ENCODE measurements at regions of chr10 and their contacts with region 1.

Region 1: GRCh38 chr10:124719213-124719851 is 24.8 kb downstream of the FAM53B start:
- DNase-seq: peak; percentile 83
- ATAC-seq: peak; percentile 44
- H3K4me3 Mint-ChIP-seq: peak overlapping the region; percentile 68
- H3K27ac Mint-ChIP-seq: peak overlapping the region; percentile 95
- H3K4me1 Mint-ChIP-seq: peaks cover 95% of the 10 kb centered on the region
- H3K27me3 Mint-ChIP-seq: no peaks in the 10 kb centered on the region

Region 2: GRCh38 chr10:124588736-124589490 is 130.4 kb before region 1 on chr10:
- CTCF ChIA-PET with region 1: no interaction called
- POLR2A ChIA-PET with region 1: no interaction called
- intact Hi-C with region 1: no loop called
- DNase-seq: no peak
- ATAC-seq: no peak
- H3K4me3 Mint-ChIP-seq: no peak overlapping the region
- H3K27ac Mint-ChIP-seq: no peak overlapping the region
- H3K4me1 Mint-ChIP-seq: no peaks in the 10 kb centered on the region
- H3K27me3 Mint-ChIP-seq: no peaks in the 10 kb centered on the region

Region 3: GRCh38 chr10:124626759-124627380 is 92.5 kb before region 1 on chr10:
- CTCF ChIA-PET with region 1: interaction called, 5 read pairs
- POLR2A ChIA-PET with region 1: interaction called, 4 read pairs
- intact Hi-C with region 1: loop called in 1 of 2 experiments (anchors 1 kb)
- DNase-seq: peak; percentile 70
- ATAC-seq: peak; percentile 75
- H3K4me3 Mint-ChIP-seq: no peak overlapping the region
- H3K27ac Mint-ChIP-seq: peak overlapping the region; percentile 6
- H3K4me1 Mint-ChIP-seq: peaks cover 38% of the 10 kb centered on the region
- H3K27me3 Mint-ChIP-seq: peaks cover 2% of the 10 kb centered on the region

Region 4: DNA sequence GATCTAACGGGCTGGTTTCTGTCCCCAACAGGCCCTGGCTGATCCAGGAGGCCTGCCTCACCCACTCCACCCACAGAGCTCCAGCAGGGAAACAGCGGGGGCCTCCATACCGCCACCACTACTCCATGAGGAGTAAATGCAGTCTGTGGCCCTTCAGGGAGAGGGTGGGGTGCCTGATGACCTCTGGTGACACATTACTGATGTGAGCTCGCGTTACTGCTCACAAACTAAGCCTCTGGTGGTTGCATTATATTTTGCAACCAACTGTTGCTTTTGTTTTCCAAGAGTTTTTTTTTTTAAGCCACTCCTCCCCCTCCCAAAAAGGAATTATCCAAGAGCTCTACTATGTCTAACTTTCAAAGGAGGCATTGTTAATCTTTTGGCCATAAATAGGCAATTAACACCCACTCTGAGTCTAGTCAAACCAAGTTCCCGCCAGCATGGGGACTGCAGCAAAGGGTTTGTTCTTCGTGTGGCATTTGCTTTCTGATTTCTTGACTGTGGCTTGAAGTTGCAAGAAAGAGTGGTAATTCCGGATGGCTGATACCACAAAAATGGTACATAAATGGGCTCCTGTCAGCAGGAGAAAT is 47.8 kb before region 1 on chr10:
- CTCF ChIA-PET with region 1: interaction called, 4 read pairs
- POLR2A ChIA-PET with region 1: interaction called, 11 read pairs
- intact Hi-C with region 1: no loop called
- DNase-seq: peak; percentile 50
- ATAC-seq: peak; percentile 71
- H3K4me3 Mint-ChIP-seq: no peak overlapping the region
- H3K27ac Mint-ChIP-seq: peak overlapping the region; percentile 55
- H3K4me1 Mint-ChIP-seq: peaks cover 66% of the 10 kb centered on the region
- H3K27me3 Mint-ChIP-seq: no peaks in the 10 kb centered on the region

Region 5: DNA sequence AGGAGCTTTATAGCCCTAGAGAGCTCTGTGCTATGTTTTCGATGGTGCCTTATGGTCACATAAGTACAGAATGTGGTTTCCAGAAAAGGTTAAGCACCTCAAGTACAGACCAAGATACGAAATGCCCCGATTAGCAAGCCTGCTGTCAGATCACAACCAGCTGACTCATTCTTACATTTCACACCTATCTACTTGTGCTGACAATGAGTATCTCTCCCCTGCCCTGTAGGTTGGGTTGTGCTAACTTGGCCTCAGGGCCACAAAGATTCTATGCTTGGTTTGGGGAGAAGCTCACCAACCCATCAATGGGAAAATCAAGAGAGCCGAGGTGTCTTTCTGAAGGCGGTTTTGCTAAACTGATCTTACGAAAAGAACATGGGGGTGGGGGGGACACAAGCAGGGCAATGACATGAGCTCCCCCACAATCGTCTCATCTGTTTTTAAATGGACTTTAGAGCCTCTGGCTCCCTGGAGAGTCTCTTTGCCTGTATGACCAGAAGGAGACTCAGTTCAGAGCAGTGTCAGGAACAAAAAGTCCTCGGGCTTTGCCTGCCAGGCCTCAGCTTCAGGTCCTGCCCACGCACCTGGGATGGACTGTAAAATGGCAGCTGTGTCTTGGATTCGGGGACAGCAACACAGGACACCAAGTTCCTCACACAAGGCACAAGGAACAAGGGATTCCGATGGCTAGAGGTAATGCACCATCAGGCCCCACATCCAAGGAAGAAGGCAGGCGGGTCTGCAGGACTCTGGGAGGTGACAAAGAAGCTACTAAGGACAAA is 30.3 kb before region 1 on chr10:
- CTCF ChIA-PET with region 1: interaction called, 125 read pairs
- POLR2A ChIA-PET with region 1: interaction called, 63 read pairs
- intact Hi-C with region 1: loop called (anchors 1 kb)
- DNase-seq: peak; percentile 81
- ATAC-seq: peak; percentile 89
- H3K4me3 Mint-ChIP-seq: peak overlapping the region; percentile 8
- H3K27ac Mint-ChIP-seq: peak overlapping the region; percentile 84
- H3K4me1 Mint-ChIP-seq: peaks cover 81% of the 10 kb centered on the region
- H3K27me3 Mint-ChIP-seq: peaks cover 2% of the 10 kb centered on the region

Region 6: DNA sequence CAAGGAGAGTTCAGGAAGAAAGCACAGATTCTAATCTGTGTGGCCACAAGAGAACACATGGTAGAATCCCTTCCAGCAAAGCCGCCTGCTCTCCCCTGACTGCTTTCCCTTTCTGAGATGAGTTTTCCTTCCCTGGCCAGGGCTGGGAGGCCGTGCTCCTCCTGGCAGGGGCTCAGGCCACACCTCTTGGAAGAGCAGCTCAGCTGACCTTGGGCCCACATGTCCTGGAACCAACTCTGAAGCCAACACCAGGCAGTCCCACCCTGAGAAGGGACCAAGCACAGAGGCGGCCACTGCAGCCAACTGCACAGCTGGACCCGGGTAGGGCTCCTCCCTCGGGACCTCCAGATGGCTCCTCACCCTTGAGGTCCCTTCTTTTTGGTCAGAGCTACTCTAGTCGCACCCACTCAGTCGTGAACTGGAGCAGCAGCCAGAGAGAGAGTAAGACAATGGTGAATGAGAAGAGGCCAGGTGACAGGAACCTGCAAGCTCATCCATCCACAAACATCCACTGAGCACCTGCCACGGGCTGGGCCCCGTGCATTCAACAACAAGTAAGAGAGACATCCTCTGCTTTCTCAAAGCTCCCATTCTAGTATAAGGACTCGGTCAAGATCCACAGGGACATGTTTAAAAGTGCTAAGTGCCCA is 15.4 kb before region 1 on chr10:
- CTCF ChIA-PET with region 1: interaction called, 46 read pairs
- POLR2A ChIA-PET with region 1: interaction called, 20 read pairs
- intact Hi-C with region 1: loop called in 1 of 2 experiments (anchors 1 kb)
- DNase-seq: no peak
- ATAC-seq: no peak
- H3K4me3 Mint-ChIP-seq: no peak overlapping the region
- H3K27ac Mint-ChIP-seq: peak overlapping the region; percentile 75
- H3K4me1 Mint-ChIP-seq: peaks cover 93% of the 10 kb centered on the region
- H3K27me3 Mint-ChIP-seq: no peaks in the 10 kb centered on the region

Region 7: GRCh38 chr10:124791378-124792348 is 72.3 kb after region 1 on chr10 and contains the start of gene EEF1AKMT2:
- CTCF ChIA-PET with region 1: no interaction called
- POLR2A ChIA-PET with region 1: no interaction called
- intact Hi-C with region 1: loop called (anchors 1 to 2 kb)
- DNase-seq: peak; percentile 91
- ATAC-seq: peak; percentile 93
- H3K4me3 Mint-ChIP-seq: peak within 1 kb of the TSS; percentile 98
- H3K27ac Mint-ChIP-seq: peak within 1 kb of the TSS; percentile 90
- H3K4me1 Mint-ChIP-seq: peaks cover 16% of the 10 kb centered on the region
- H3K27me3 Mint-ChIP-seq: no peaks in the 10 kb centered on the region
- total RNA-seq, gene EEF1AKMT2: 21.4 to 28.4 TPM

Measured in activated CD4-positive, alpha-beta T cell treated with anti-CD3 and anti-CD28 coated beads for 36 hours (primary cell).